Right cardiac atrium (tissue), 5 donors: ENCODE measurements at regions of chr15 and their contacts with region 1.

Region 1: DNA sequence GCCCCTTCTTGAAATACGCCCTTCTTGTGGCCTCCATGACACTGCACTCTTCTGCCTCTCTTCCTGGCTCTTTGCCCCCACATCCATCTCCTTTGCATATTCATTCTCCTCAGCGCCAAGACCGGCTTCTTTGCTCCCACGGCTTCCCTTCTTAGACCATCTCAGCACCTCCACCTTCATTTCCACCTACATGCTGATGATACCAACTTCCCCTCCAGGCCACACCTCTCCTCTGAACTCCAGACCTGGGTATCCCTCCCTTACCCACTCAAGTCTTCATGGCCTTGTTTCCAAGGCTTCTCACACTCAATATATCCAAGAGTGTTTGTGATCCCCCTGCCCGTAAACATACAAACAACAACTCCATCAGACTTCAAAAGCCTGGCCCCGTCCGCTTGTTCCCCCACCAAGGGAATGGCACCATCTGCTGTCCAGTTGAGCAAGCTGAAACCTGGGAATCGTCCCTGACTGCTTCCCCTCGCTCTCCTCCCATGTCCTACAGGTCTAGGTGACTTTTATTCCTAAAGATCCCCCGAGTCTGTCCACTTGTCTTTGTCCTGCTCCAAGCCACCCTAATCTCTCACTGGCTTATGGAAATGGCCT is 27.8 kb upstream of the FAM174B start:
- DNase-seq: no peak
- ATAC-seq: peak; percentile 26 to 55
- H3K4me3 ChIP-seq: no peak overlapping the region
- H3K27ac ChIP-seq: no peak overlapping the region
- H3K4me1 ChIP-seq: no peaks in the 10 kb centered on the region
- H3K27me3 ChIP-seq: no peaks in the 10 kb centered on the region

Region 2: DNA sequence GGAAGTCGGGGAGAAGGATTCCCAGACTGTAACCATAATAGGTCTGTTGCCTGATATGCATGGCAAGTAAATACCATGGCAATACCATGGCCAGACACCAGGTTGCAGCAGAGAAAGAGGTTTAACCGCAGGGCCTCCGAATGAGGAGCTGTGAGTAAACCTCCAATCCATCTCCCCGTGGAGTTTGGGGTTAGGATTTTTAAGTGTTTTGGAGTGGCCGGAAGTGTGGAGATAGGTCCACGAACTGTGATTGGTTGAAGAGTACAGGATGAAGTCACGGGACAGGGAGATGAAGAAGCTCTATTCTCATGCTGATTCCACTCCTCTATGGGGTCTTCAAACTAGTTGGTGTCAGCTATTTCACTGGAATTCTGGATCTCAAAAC is 161.7 kb before region 1 on chr15:
- intact Hi-C with region 1: loop called in 3 of 4 experiments (anchors 2 to 5 kb)
- DNase-seq: peak; percentile 74 to 84 (median 76)
- ATAC-seq: peak; percentile 91 to 93
- H3K4me3 ChIP-seq: no peak overlapping the region
- H3K27ac ChIP-seq: no peak overlapping the region
- H3K4me1 ChIP-seq: peaks cover 2% of the 10 kb centered on the region
- H3K27me3 ChIP-seq: no peaks in the 10 kb centered on the region

Region 3: GRCh38 chr15:92527197-92527596 is 156.1 kb before region 1 on chr15:
- intact Hi-C with region 1: loop called in 2 of 4 experiments (anchors 5 kb)
- DNase-seq: peak in 1 of 3 donors; percentile 47
- ATAC-seq: peak; percentile 57 to 80
- H3K4me3 ChIP-seq: no peak overlapping the region
- H3K27ac ChIP-seq: peak overlapping the region; percentile 25
- H3K4me1 ChIP-seq: no peaks in the 10 kb centered on the region
- H3K27me3 ChIP-seq: no peaks in the 10 kb centered on the region

Region 4: GRCh38 chr15:92868992-92869988 is 186.0 kb after region 1 on chr15:
- intact Hi-C with region 1: no loop called
- DNase-seq: no peak
- ATAC-seq: peak; percentile 65 to 71
- H3K4me3 ChIP-seq: no peak overlapping the region
- H3K27ac ChIP-seq: peak overlapping the region; percentile 47
- H3K4me1 ChIP-seq: no peaks in the 10 kb centered on the region
- H3K27me3 ChIP-seq: no peaks in the 10 kb centered on the region